ENCODE measurements at regions of chr4 and their contacts with region 1.

Region 1: DNA sequence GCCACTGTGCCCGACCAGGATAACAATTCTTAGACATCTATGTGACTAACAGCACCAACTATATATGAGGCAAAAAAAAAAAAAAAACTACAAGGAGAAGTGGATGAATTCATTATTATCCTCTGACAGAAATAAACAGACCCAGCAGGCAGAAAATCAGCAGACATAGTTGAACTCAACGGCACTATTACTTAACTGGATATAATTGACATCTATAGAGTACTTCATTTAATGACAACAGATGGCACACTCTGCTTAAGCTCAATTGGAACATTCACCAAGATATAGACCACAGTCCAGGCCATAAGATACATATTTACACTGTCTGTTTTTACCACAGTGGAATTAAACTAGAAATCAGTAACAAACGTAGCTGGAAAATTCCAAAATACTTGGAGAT is 13.3 kb downstream of the CLDN22 start:
- DNase-seq: no peak

Region 2: GRCh38 chr4:183321079-183321478 is 14.3 kb after region 1 on chr4:
- intact Hi-C with region 1: loop called in 1 of 2 experiments (anchors 1 kb)
- DNase-seq: no peak

Region 3: DNA sequence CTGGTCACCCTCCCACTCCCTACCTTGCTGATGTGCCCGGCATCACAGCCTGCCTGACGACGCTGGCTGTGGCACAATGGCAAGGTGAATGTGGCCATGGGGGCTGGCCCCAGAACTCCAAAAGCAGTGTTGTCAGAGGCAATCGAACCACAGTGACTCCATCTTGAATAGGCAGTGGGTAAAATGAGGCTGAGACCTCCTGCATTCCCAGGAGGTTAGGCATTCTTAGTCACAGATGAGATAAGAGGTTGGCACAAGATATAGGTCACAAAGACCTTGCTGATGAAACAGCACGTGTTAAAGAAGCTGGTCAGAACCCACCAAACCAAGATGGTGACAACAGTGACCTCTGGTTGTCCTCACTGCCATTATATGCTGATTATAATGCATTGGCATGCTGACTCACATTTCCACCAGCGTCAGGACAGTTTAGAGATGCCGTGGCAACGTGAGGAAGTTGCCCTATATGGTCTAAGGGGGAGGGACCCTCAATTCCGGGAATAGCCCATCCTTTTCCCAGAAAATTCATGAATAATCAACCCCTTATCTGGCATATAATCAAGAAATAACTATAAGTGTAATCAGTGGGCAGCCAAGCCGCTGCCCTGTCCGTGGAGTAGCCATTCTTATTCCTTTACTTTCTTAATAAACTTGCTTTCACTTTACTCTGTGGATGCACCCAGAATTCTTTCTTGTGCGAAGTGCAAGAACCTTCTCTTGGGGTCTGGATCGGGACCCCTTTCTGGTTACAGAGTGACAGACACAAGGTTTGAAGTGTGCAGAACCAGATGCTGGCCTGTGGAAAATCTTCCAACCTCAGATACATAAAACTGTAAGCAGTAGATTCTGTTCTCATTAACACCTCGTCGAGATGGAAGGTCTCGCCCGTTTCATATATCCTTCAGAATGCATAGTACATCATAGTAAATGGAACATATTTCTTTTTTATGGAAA is 42.2 kb after region 1 on chr4:
- intact Hi-C with region 1: no loop called
- DNase-seq: peak; percentile 50

Region 4: DNA sequence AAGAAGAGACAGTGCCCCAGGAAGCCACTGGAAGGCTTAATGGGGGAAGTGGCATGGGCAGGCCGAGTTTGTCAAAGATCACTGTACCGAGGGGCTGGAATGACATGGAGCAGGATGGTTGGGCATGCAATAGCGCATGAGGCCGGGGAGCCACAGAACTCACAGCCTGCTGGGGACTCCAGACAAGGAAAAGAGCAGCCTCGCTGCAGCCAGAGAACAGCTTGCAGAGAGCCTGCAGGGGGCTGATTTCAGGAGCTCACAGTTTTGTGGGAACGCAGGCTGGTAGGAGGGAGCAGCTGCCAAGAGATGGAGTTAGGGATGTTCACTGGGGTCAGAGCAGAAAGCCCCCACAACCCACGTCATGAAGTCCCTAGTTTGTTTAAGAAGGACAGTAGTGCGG is 643.7 kb after region 1 on chr4:
- intact Hi-C with region 1: no loop called
- DNase-seq: no peak